H1 (cell line): ENCODE measurements at regions of chr7 and their contacts with region 1.

Region 1: GRCh38 chr7:90595801-90596671 is at the start of gene CDK14:
- DNase-seq: peak in 1 of 2 experiments; percentile 87
- H3K4me3 ChIP-seq: peak within 1 kb of the TSS; percentile 64 to 97 (median 84)
- H3K27ac ChIP-seq: peak within 1 kb of the TSS; percentile 73; the same call in 1 of the 2 replicates
- H3K4me1 ChIP-seq: peaks cover 0 to 8% (median 5%) of the 10 kb centered on the region in 4 experiments; a peak in 5 of 7 replicates
- H3K27me3 ChIP-seq: peaks cover 0 to 10% (median 2%) of the 10 kb centered on the region in 4 experiments; a peak in 4 of 7 replicates
- CTCF ChIP-seq: peak; percentile 31 to 53 (median 49)
- EP300 ChIP-seq: no peak
- POLR2A ChIP-seq: peak; percentile 51 to 55
- RAD21 ChIP-seq: peak in 1 of 2 experiments; percentile 8; a peak in 2 of 4 replicates
- total RNA-seq, gene CDK14: 47.3 and 48.8 TPM in 2 replicates

Region 2: DNA sequence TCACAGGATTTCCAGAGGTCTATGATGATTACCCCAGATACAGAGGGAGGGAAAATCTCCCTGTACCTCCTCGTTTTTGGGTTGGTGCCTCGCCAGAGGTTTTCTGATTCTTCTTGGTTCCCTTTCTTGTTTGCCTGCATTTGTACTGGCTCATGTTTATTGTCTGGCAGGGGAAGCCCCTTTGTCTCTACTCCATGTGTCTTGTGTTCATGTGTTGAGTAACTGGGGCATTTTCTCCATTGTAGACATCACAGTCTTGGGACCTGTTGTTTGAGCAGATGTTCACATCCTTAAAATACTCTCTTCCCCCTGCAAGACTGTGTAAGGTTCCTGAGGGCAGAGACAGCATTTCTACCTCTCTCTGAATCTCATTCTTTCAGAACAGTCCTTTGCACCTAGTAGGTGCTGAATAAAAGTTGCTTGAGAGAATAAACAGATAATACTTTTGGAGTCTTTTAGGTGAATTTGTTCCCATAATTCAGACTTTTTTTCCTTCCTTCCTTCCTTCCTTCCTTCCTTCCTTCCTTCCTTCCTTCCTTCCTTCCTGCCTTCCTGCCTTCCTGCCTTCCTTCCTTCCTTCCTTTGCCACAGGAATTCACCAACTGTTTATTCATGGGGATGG is 25.2 kb after region 1 on chr7:
- CTCF ChIA-PET with region 1: interaction called, 13 read pairs
- POLR2A ChIA-PET with region 1: no interaction called
- DNase-seq: no peak
- H3K4me3 ChIP-seq: no peak overlapping the region
- H3K27ac ChIP-seq: no peak overlapping the region
- H3K4me1 ChIP-seq: peaks cover 0 to 24% (median 9%) of the 10 kb centered on the region in 4 experiments; a peak in 4 of 7 replicates
- H3K27me3 ChIP-seq: peaks cover 0 to 8% (median 2%) of the 10 kb centered on the region in 4 experiments; a peak in 3 of 7 replicates
- CTCF ChIP-seq: no peak
- EP300 ChIP-seq: no peak
- POLR2A ChIP-seq: no peak
- RAD21 ChIP-seq: no peak

Region 3: DNA sequence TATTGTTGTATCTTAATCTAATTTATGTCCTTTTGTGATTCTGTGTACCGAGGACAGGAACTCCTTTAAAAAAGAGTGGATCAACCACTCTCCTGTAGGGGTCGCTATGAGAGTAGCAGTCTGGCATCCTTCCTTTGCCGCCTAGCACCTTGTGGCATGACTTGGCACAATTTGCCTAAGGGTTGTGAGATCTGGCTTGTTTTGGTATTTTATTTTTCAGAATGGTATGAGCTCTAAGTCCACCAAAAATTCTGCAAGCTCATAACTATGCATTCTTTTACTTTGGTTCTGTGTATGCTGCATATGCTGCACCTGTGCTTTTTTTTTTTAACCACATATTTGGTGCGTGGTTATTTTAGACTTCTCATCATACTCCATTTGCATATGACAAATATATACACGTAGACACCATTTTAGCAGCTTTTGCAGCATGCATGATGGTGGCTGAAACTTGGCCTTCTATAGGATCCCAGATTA is 112.8 kb after region 1 on chr7:
- CTCF ChIA-PET with region 1: no interaction called
- POLR2A ChIA-PET with region 1: no interaction called
- DNase-seq: peak in 1 of 2 experiments; percentile 60
- H3K4me3 ChIP-seq: no peak overlapping the region
- H3K27ac ChIP-seq: no peak overlapping the region
- H3K4me1 ChIP-seq: peaks cover 3 to 22% (median 13%) of the 10 kb centered on the region in 4 experiments
- H3K27me3 ChIP-seq: no peaks in the 10 kb centered on the region
- CTCF ChIP-seq: peak; percentile 69 to 97 (median 89)
- EP300 ChIP-seq: no peak
- POLR2A ChIP-seq: no peak
- RAD21 ChIP-seq: peak; percentile 87 to 89